ENCODE measurements at regions of chr11 and their contacts with region 1.

Region 1: GRCh38 chr11:5307256-5308019 is 5.7 kb upstream of the OR51B4 start:
- DNase-seq: no peak
- ATAC-seq: no peak

Region 2: GRCh38 chr11:5274395-5274794 is 33.0 kb before region 1 on chr11:
- intact Hi-C with region 1: loop called (anchors 2 kb)
- DNase-seq: no peak
- ATAC-seq: no peak

Region 3: GRCh38 chr11:5460983-5461621 is 153.7 kb after region 1 on chr11:
- intact Hi-C with region 1: no loop called
- DNase-seq: no peak
- ATAC-seq: no peak

Measured in left ventricle myocardium superior (tissue), 1 donor.